ENCODE measurements at regions of chr13 and their contacts with region 1.

Region 1: DNA sequence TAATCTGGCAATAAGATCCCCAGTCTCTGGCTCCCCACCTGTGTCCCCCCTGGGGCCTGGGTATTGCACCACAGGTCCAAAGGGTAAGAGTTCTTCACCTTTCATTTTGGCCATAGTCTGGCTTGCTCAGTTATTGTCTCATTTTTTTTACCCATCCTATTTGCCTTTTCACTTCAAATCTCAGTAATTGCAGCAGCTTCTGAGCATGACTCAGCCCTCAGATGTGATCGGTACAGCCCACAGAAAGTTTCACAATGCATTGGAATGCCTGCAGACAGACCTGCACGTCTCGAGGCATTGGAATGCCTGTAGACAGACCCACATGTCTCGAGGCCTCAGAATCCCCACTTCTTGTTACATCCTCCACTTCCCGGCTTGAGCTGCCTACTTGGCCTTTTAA is 173.6 kb downstream of the NUFIP1 start:
- DNase-seq: peak; percentile 70
- ATAC-seq: peak; percentile 85
- H3K4me3 Mint-ChIP-seq: no peak overlapping the region
- H3K27ac Mint-ChIP-seq: no peak overlapping the region
- H3K4me1 Mint-ChIP-seq: peaks cover 32% of the 10 kb centered on the region
- H3K27me3 Mint-ChIP-seq: peaks cover 22% of the 10 kb centered on the region

Region 2: DNA sequence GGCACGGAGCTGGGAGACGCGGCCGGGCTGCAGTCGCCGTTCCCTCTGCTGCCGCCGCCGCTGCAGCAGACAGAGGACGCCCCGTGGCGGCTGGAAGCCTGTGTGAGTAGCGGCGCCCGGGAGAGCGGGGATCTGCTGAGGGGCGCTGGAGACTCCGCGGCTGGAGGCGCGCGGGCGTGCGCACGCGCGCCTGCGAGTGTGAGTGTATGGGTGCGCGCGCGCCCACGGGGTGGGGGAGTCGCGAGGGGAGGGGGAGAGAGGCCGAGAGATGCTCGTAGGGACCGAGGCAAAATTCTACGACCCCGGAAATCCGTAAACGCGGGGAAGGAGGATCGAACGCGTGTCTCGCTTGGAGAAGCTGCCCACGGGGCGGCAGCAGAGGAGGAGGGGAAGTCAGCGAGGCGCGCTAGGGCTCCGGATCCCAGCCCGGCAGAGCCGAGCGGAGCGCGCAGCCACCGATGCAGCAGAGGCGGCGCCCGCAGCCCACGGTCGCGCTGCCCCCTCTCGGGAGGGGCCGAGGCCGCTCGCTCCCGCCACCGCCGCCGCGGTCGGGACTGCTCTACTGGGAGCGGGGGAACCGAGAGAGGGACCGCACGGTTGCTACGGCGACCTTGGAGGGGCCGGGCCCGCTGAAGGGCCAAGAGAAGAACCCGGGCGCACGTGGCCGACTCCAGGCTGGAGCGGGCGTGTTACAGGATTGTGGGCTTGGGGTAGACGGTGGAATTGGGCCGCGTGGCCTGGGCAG is 1028.7 kb before region 1 on chr13 and contains the start of gene ENOX1:
- CTCF ChIA-PET with region 1: no interaction called
- POLR2A ChIA-PET with region 1: no interaction called
- intact Hi-C with region 1: no loop called
- DNase-seq: peak; percentile 64
- ATAC-seq: peak; percentile 68
- H3K4me3 Mint-ChIP-seq: peak within 1 kb of the TSS; percentile 67
- H3K27ac Mint-ChIP-seq: no peak within 1 kb of the TSS
- H3K4me1 Mint-ChIP-seq: peaks cover 9% of the 10 kb centered on the region
- H3K27me3 Mint-ChIP-seq: peaks cover 44% of the 10 kb centered on the region
- total RNA-seq, gene ENOX1: 0.28 to 0.48 TPM

Region 3: DNA sequence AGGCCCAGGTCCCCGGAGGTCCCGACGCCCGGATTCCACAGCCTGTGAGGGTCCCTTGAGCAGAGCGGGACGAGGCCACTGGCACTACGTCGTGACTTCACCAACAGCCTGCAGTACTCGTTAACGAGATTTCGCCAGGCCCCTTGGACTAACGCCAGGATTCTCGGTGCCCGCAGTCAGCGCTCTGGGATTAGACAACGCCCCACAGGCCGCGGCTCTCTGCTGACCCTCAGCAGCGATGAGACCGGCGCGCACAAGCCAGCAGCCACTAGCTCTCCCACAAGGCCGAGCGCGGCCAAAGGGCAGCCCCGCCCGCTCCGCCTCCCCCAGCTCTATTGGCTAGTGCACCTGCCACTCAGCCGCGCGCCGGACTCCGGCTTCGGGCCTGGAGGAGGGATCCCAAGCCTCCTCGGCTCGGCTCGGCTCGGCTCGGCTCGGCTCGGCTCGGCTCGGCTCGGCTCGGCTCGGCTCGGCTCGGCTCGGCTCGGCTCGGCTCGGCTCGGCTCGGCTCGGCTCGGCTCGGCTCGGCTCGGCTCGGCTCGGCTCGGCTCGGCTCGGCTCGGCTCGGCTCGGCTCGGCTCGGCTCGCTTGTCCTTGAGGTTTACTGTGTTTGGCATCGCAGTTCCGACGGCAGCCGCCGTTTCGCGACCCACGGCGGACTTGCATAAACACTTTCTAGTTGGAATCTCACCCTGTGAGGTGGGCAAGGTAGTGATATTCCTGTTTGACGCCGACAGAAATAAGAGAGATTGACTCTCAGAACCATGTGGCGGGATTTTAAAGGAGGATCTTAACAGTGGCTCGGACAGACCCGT is 673.7 kb before region 1 on chr13:
- CTCF ChIA-PET with region 1: no interaction called
- POLR2A ChIA-PET with region 1: no interaction called
- intact Hi-C with region 1: no loop called
- DNase-seq: peak; percentile 96
- ATAC-seq: peak; percentile 100
- H3K4me3 Mint-ChIP-seq: peak overlapping the region; percentile 87
- H3K27ac Mint-ChIP-seq: peak overlapping the region; percentile 90
- H3K4me1 Mint-ChIP-seq: peaks cover 15% of the 10 kb centered on the region
- H3K27me3 Mint-ChIP-seq: peaks cover 4% of the 10 kb centered on the region

Region 4: GRCh38 chr13:44648392-44649103 is 167.1 kb before region 1 on chr13:
- CTCF ChIA-PET with region 1: interaction called, 3 read pairs
- POLR2A ChIA-PET with region 1: no interaction called
- intact Hi-C with region 1: loop called (anchors 2 to 5 kb)
- DNase-seq: peak; percentile 25
- ATAC-seq: peak; percentile 85
- H3K4me3 Mint-ChIP-seq: no peak overlapping the region
- H3K27ac Mint-ChIP-seq: peak overlapping the region; percentile 37
- H3K4me1 Mint-ChIP-seq: peaks cover 23% of the 10 kb centered on the region
- H3K27me3 Mint-ChIP-seq: peaks cover 26% of the 10 kb centered on the region

Region 5: GRCh38 chr13:45119991-45120864 is 304.6 kb after region 1 on chr13 and contains the start of gene GTF2F2:
- CTCF ChIA-PET with region 1: no interaction called
- POLR2A ChIA-PET with region 1: no interaction called
- intact Hi-C with region 1: no loop called
- DNase-seq: peak; percentile 90
- ATAC-seq: peak; percentile 68
- H3K4me3 Mint-ChIP-seq: no peak within 1 kb of the TSS
- H3K27ac Mint-ChIP-seq: no peak within 1 kb of the TSS
- H3K4me1 Mint-ChIP-seq: peaks cover 5% of the 10 kb centered on the region
- H3K27me3 Mint-ChIP-seq: no peaks in the 10 kb centered on the region
- total RNA-seq, gene GTF2F2: 19.9 to 25.6 TPM

Measured in activated CD4-positive, alpha-beta T cell treated with anti-CD3 and anti-CD28 coated beads for 36 hours (primary cell).